Posterior cingulate gyrus (tissue), 11 donors: ENCODE measurements at regions of chr17 and their contacts with region 1.

Region 1: GRCh38 chr17:50547035-50547735 is at the start of gene SPATA20:
- DNase-seq: peak; percentile 77 to 98 (median 88)

Region 2: GRCh38 chr17:50626037-50626574 is 78.9 kb after region 1 on chr17:
- intact Hi-C with region 1: loop called (anchors 2 kb)
- DNase-seq: peak in 7 of 10 donors; percentile 50 to 94 (median 56)

Region 3: GRCh38 chr17:50689251-50689650 is 142.1 kb after region 1 on chr17:
- intact Hi-C with region 1: loop called (anchors 2 kb)
- DNase-seq: no peak

Region 4: GRCh38 chr17:50783193-50783660 is 236.0 kb after region 1 on chr17:
- intact Hi-C with region 1: loop called (anchors 10 kb)
- DNase-seq: peak; percentile 77 to 98 (median 92)

Region 5: DNA sequence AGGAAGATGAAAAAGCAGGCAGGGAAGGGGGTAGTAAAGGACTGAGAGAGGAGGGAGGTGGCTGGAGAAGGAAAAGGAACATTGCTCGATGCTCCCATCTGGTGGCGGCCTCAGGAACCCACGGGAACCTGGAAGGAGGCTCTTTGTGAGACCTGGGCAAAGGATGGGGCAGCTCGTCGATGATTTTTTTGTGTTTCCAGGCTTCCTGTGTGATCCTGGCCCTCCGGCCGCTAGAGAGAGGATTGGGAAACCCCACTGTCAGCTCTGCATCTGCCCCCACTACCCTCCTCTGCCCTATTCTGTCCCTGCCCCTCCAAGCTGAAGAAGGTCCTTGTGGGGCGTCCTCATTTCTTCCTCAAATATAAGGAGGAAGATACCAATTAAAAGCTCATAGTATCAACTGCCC is 294.8 kb after region 1 on chr17:
- intact Hi-C with region 1: loop called (anchors 2 kb)
- DNase-seq: peak; percentile 66 to 97 (median 88)